Common myeloid progenitor, CD34-positive (primary cell): ENCODE measurements at regions of chr12 and their contacts with region 1.

Region 1: DNA sequence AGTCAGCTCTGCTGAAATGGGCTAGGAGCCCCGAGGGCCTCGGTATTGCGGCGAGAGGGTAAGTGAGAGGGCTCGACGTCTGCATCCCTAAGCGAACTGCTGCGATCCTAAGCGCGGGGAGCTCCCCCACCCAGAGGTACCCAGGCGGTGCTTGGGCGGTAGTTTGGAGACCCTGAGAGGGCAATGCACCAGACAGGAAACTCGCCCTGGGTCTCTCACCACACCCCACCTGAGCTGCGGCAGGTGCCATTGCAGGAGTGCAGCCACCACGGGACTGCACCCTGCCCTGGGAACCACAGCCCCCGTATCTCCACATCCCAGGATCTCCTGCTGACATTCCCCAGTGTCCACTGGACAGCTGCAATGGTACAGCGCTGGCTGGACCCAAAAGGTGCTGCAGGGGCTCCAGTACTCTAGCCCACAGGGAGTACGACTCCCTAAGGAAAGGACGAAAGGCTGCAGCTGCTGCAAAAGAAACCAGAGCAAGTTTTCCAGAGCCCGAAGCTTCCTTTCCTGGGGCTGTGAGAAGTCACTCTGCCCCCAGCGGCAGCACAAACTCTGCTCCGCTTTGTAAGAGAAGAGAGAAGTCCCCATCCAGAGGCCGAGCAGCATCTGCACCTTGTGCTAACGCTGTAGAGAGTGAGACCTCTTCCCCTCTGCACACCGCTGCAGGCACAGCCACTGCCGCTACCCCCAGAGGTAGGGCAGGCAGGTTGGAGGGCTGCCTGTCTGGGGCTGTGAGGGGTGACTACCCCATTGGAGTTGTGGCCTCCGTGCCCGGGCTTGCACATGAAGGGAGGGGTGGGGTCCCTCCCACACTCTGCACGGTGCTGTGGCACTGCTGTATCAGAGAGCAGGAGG is 31.1 kb upstream of the MON2 start:
- DNase-seq: peak; percentile 68 to 83 (median 79)
- H3K4me3 ChIP-seq: peak overlapping the region; percentile 52 to 89 (median 79)
- H3K27ac ChIP-seq: no peak overlapping the region
- H3K4me1 ChIP-seq: peaks cover 0 to 16% (median 15%) of the 10 kb centered on the region in 4 experiments
- H3K27me3 ChIP-seq: no peaks in the 10 kb centered on the region

Region 2: GRCh38 chr12:62466594-62467491 is 31.3 kb after region 1 on chr12 and contains the start of gene MON2:
- CTCF ChIA-PET with region 1: interaction called, 13 read pairs
- POLR2A ChIA-PET with region 1: interaction called, 3 read pairs
- DNase-seq: peak; percentile 85 to 91 (median 90)
- H3K4me3 ChIP-seq: peak within 1 kb of the TSS; percentile 94 to 100 (median 98)
- H3K27ac ChIP-seq: peak within 1 kb of the TSS; percentile 96 to 98
- H3K4me1 ChIP-seq: peaks cover 14 to 31% (median 22%) of the 10 kb centered on the region in 4 experiments
- H3K27me3 ChIP-seq: no peaks in the 10 kb centered on the region

Region 3: DNA sequence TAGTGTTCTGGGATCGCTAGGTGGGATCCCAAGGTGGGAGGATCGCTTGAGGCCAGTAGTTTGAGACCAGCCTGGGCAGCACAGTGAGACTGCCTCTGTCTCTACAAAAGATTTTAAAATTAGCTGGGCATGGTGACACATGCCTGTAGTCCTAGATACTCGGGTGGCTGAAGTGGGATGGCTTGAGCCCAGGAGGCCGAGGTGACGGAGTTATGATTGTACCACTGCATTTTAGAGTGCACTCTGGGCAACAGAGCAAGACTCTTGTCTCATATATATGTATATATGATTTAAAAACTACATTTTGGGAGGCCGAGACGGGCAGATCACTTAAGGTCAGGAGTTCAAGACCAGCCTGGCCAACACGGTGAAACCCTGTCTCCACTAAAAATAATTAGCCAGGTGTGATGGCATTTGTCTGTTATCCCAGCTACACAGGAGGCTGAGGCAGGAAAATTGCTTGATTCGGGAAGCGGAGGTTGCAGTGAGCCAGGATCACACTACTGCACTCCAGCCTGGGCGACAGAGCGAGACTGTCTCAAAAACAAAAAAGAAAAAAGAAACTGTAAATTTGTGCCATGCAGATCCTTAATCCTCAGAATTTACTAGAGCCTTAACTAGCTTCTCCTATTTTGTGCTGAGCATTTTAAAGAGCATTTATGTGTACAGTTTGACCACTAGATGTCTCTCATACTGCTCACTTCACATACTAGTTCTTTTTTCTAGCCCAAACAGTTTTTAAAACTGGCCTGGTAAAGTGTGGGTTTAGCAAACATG is 145.9 kb after region 1 on chr12:
- CTCF ChIA-PET with region 1: interaction called, 10 read pairs
- POLR2A ChIA-PET with region 1: no interaction called
- DNase-seq: peak; percentile 77 to 86 (median 84)
- H3K4me3 ChIP-seq: no peak overlapping the region
- H3K27ac ChIP-seq: no peak overlapping the region
- H3K4me1 ChIP-seq: peaks cover 0 to 15% (median 11%) of the 10 kb centered on the region in 4 experiments
- H3K27me3 ChIP-seq: no peaks in the 10 kb centered on the region

Region 4: DNA sequence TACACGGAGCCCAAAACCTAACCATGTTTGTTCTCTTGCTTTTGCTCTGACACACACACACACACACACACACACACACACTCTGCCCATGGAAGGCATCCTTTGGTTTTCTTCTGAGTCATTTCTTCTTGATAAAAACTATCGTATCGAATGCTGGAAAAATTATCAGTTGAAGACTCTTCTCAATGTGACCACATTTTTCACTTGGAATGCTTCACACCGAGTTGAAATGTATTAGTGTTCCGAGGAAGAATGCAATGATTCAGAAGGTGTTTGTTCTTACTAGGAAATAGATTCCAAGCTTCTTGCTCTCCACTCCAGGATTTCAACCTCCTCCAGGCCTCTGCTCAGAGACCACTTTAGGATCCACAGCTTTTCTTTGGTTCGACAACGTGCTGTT is 257.4 kb after region 1 on chr12:
- CTCF ChIA-PET with region 1: no interaction called
- POLR2A ChIA-PET with region 1: no interaction called
- DNase-seq: no peak
- H3K4me3 ChIP-seq: no peak overlapping the region
- H3K27ac ChIP-seq: no peak overlapping the region
- H3K4me1 ChIP-seq: peaks cover under 1 to 20% (median 9%) of the 10 kb centered on the region in 4 experiments
- H3K27me3 ChIP-seq: no peaks in the 10 kb centered on the region

Region 5: GRCh38 chr12:62781136-62781880 is 345.8 kb after region 1 on chr12:
- CTCF ChIA-PET with region 1: no interaction called
- POLR2A ChIA-PET with region 1: no interaction called
- DNase-seq: no peak
- H3K4me3 ChIP-seq: no peak overlapping the region
- H3K27ac ChIP-seq: no peak overlapping the region
- H3K4me1 ChIP-seq: peaks cover 1 to 13% (median 11%) of the 10 kb centered on the region in 4 experiments
- H3K27me3 ChIP-seq: no peaks in the 10 kb centered on the region

Region 6: GRCh38 chr12:62793256-62794217 is 358.0 kb after region 1 on chr12:
- CTCF ChIA-PET with region 1: interaction called, 15 read pairs
- POLR2A ChIA-PET with region 1: no interaction called
- DNase-seq: peak; percentile 69 to 81 (median 74)
- H3K4me3 ChIP-seq: no peak overlapping the region
- H3K27ac ChIP-seq: peak overlapping the region in 1 of 2 experiments; percentile 1
- H3K4me1 ChIP-seq: peaks cover 0 to 2% (median 0%) of the 10 kb centered on the region in 4 experiments
- H3K27me3 ChIP-seq: no peaks in the 10 kb centered on the region

Region 7: DNA sequence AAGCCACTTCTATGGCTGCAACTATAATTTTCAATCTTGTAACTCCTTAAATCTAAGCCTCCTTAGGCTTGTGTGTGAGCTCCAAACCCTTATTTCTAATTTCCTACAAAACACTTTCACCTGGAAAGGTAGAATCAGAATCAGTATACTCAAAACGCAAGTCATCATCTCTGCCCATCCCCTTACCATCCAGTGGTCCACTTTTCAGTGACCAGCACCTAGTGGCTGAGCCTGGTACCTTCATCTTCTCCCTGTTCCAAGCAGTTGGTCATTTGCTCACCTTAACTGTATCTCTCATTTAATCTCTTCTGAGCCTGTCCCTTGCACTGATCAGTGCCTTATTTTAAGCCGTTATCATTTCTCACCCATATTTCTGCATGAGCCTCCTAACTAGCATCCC is 391.5 kb after region 1 on chr12:
- CTCF ChIA-PET with region 1: no interaction called
- POLR2A ChIA-PET with region 1: no interaction called
- DNase-seq: no peak
- H3K4me3 ChIP-seq: no peak overlapping the region
- H3K27ac ChIP-seq: no peak overlapping the region
- H3K4me1 ChIP-seq: no peaks in the 10 kb centered on the region
- H3K27me3 ChIP-seq: no peaks in the 10 kb centered on the region